Psoas muscle (tissue), 8 donors: ENCODE measurements at regions of chr4 and their contacts with region 1.

Region 1: DNA sequence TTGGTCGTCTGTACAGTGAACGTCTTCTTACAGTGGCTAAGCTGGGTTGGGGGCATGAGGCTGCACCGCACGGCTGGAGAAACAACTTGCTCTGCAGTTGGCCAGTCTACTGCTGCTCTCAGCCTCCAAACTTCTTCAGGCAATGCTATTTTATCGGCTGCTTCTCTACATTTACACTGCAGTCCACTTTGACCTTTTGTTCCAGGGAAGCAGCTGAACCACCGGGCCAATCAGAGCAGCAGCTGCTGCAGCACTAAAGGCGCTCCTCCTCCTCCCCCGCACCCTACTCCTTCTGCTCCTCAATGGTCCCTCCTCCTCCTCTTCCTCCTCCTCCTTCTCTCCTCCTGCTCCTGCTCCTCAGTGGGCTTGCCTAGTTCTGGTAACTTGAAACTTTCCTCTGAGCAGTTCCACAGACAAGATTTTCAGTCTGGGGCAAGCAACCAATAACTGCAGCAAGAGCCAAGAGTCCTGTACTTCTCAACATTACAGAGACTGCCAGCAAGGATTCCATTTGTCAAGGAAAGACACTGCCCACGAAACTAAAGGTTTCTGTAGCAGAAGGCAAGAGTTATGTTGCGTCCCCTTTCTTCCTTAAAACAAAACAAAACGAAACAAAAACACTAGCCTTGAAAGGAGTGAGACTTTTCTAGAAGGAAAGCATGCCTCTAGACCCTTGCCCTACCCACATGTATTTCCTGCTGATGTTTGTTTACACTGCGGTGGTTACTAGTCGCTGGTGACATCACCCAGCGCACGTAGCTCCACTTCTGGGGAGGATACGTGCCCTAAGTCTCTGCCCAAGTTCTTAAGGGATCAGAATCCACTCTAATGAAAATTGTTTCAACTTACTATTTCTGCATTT is 125.7 kb upstream of the NAP1L5 start:
- DNase-seq: peak; percentile 80 to 91
- ATAC-seq: peak; percentile 94 to 96 (median 95)
- H3K4me3 ChIP-seq: peak overlapping the region; percentile 77
- H3K27ac ChIP-seq: peak overlapping the region; percentile 93
- H3K4me1 ChIP-seq: peaks cover 33% of the 10 kb centered on the region
- H3K27me3 ChIP-seq: no peaks in the 10 kb centered on the region
- CTCF ChIP-seq: no peak

Region 2: GRCh38 chr4:88646528-88647280 is 176.6 kb before region 1 on chr4:
- intact Hi-C with region 1: no loop called
- DNase-seq: no peak
- ATAC-seq: no peak
- H3K4me3 ChIP-seq: no peak overlapping the region
- H3K27ac ChIP-seq: no peak overlapping the region
- H3K4me1 ChIP-seq: peaks cover 20% of the 10 kb centered on the region
- H3K27me3 ChIP-seq: no peaks in the 10 kb centered on the region
- CTCF ChIP-seq: no peak

Region 3: DNA sequence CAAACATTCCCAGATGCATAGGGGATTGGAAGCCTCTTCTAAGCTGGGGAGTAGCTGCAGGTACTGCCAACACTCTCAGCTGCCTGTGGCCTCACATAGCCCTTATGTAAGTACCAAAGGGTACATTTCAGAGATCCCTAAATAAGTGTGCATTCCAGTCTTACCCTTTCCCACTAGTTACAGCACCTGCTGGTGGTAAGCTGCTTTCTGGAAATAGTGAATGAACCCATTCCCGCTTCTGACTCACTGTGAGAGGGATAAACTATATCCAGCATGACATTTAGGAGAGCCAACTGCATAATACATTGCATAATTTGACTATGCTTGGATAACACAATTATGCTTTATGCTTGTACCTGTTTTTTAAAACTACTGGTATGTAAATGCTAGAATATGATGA is 84.7 kb after region 1 on chr4:
- intact Hi-C with region 1: loop called in 1 of 2 experiments (anchors 5 kb)
- DNase-seq: no peak
- ATAC-seq: peak; percentile 95 to 99 (median 98)
- H3K4me3 ChIP-seq: no peak overlapping the region
- H3K27ac ChIP-seq: peak overlapping the region; percentile 64
- H3K4me1 ChIP-seq: peaks cover 22% of the 10 kb centered on the region
- H3K27me3 ChIP-seq: no peaks in the 10 kb centered on the region
- CTCF ChIP-seq: no peak